Right ventricle myocardium inferior (tissue), 1 donor: ENCODE measurements at regions of chr19 and their contacts with region 1.

Region 1: GRCh38 chr19:45692187-45693105 is at the start of gene QPCTL:
- DNase-seq: peak; percentile 97
- ATAC-seq: peak; percentile 95
- total RNA-seq, gene QPCTL: 1.5 TPM

Region 2: GRCh38 chr19:45717166-45717982 is 24.9 kb after region 1 on chr19:
- intact Hi-C with region 1: loop called (anchors 2 kb)
- DNase-seq: peak; percentile 100
- ATAC-seq: peak; percentile 99